Heart right ventricle (tissue), 16 donors: ENCODE measurements at regions of chr3 and their contacts with region 1.

Region 1: DNA sequence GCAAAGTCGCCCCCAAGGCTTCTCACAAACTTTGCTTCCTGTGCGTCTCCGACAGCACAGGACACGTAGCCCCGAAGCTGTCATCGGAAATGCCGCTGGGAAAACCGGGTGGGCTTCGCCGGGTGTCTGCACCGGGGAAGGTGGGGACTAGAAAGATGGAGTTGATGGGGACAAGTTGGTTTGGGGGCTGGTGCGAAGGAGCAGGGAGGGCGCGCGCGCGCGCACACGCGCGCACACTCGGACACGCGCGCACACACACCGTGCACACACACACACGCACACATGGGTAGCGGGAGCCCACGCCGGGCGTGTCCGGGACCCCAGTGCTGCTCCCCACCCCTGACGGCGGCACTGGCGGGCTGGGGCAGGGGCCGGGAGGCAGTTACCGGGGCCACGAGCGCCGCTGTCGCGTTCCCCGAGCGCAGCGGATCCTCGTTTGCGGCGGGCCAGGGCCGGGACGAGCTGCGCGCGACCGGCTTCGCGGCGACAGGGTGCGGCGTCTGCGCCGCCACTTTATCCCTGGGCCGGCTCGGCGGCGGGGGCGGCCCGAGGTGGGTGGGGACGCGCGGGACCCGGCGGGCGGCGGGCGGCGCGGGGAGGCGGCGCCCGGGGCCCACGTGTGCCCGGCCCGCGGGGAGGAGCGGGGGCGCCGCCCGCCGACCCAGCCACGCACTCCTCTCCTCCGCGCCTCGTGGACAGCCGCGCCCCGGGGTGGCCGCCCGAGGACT is 547 bp upstream of the MGLL start:
- DNase-seq: peak; percentile 39 to 77
- ATAC-seq: peak; percentile 73 to 87 (median 83)
- H3K4me3 ChIP-seq: peak overlapping the region; percentile 32 to 92 (median 84)
- H3K27ac ChIP-seq: peak overlapping the region; percentile 74 to 98 (median 95)
- H3K4me1 ChIP-seq: peaks cover 5 to 48% (median 32%) of the 10 kb centered on the region in 9 donors
- H3K27me3 ChIP-seq: no peaks in the 10 kb centered on the region
- CTCF ChIP-seq: peak in 6 of 9 donors; percentile 12 to 57 (median 38)

Region 2: GRCh38 chr3:127652231-127652995 is 170.4 kb before region 1 on chr3:
- intact Hi-C with region 1: loop called in 1 of 10 experiments (anchors 2 kb)
- DNase-seq: peak in 1 of 2 donors; percentile 38
- ATAC-seq: peak; percentile 84 to 93 (median 89)
- H3K4me3 ChIP-seq: no peak overlapping the region
- H3K27ac ChIP-seq: no peak overlapping the region
- H3K4me1 ChIP-seq: peaks cover 0 to 12% (median 4%) of the 10 kb centered on the region in 9 donors
- H3K27me3 ChIP-seq: no peaks in the 10 kb centered on the region
- CTCF ChIP-seq: peak; percentile 79 to 97 (median 94)

Region 3: DNA sequence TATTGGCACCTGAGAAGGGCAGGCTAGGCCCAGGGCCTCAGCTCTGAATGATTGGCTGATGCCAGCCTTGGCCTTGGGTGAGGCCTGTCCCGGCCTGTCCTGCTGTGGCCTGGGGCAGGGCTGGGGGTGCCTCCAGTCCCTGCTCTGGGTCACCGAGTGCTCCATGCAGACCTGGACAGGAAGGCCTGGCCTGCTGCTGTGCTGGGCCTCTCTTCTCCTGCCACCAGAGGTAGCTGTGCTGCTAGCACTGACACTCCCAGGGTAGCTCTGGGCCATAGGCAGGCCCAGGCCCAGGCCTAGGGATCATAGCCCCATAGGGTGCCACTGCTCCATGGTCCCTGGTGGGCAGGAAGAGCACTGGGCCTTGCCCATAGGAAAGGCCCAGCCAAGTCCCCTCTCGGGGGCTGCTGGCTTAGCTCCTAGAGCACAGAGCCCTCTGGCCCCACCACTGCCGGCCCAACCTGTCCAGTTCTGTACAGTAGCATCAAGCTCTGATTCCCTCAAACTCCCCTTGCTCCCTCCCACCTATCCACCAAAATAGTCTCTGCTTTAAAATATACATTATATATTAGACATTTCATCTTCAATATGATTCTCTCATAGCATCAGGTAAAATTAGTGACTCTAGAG is 131.9 kb before region 1 on chr3:
- intact Hi-C with region 1: loop called in 9 of 10 experiments (anchors 2 to 10 kb)
- DNase-seq: peak in 1 of 2 donors; percentile 38
- ATAC-seq: peak; percentile 40 to 72 (median 66)
- H3K4me3 ChIP-seq: no peak overlapping the region
- H3K27ac ChIP-seq: peak overlapping the region in 9 of 10 donors; percentile 28 to 70 (median 53)
- H3K4me1 ChIP-seq: peaks cover 5 to 52% (median 20%) of the 10 kb centered on the region in 9 donors
- H3K27me3 ChIP-seq: no peaks in the 10 kb centered on the region
- CTCF ChIP-seq: peak; percentile 14 to 66 (median 54)

Region 4: GRCh38 chr3:127750226-127751031 is 72.4 kb before region 1 on chr3:
- intact Hi-C with region 1: loop called in 7 of 10 experiments (anchors 2 to 10 kb)
- DNase-seq: no peak
- ATAC-seq: no peak
- H3K4me3 ChIP-seq: no peak overlapping the region
- H3K27ac ChIP-seq: peak overlapping the region; percentile 31 to 94 (median 84)
- H3K4me1 ChIP-seq: peaks cover 21 to 95% (median 66%) of the 10 kb centered on the region in 9 donors
- H3K27me3 ChIP-seq: no peaks in the 10 kb centered on the region
- CTCF ChIP-seq: no peak

Region 5: GRCh38 chr3:127884041-127884440 is 61.2 kb after region 1 on chr3:
- intact Hi-C with region 1: no loop called
- DNase-seq: no peak
- ATAC-seq: no peak
- H3K4me3 ChIP-seq: no peak overlapping the region
- H3K27ac ChIP-seq: no peak overlapping the region
- H3K4me1 ChIP-seq: peaks cover 0 to 7% (median 0%) of the 10 kb centered on the region in 9 donors
- H3K27me3 ChIP-seq: no peaks in the 10 kb centered on the region
- CTCF ChIP-seq: no peak

Region 6: GRCh38 chr3:127959846-127960245 is 137.0 kb after region 1 on chr3:
- intact Hi-C with region 1: no loop called
- DNase-seq: peak in 1 of 2 donors; percentile 52
- ATAC-seq: peak; percentile 54 to 74 (median 62)
- H3K4me3 ChIP-seq: no peak overlapping the region
- H3K27ac ChIP-seq: peak overlapping the region in 9 of 10 donors; percentile 23 to 94 (median 69)
- H3K4me1 ChIP-seq: peaks cover 0 to 63% (median 10%) of the 10 kb centered on the region in 9 donors
- H3K27me3 ChIP-seq: no peaks in the 10 kb centered on the region
- CTCF ChIP-seq: peak in 7 of 9 donors; percentile 30 to 66 (median 53)